ENCODE measurements at regions of chr1 and their contacts with region 1.

Region 1: DNA sequence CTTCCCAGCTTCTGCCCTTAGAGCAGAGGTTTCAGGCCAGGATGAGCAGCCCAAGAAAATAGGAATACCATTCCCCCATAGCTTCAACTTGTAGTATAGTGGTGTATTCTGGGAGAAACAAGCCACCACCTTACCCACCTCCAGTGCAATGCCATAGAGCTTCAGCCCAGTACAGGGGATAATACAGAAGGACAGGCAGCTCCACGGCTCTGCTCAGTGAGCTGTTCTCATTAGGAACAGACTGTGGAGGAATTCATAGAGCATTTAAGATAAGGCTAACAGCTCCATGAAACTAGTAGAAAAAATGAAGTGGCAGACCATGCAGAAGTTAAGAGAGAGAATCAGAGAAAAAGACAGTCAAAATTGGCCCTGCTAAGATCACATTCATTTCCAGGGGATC is 294.7 kb upstream of the POGK start:
- DNase-seq: no peak
- ATAC-seq: peak in 1 of 8 donors; percentile 62
- H3K4me3 ChIP-seq: no peak overlapping the region
- H3K27ac ChIP-seq: no peak overlapping the region
- H3K4me1 ChIP-seq: no peaks in the 10 kb centered on the region
- H3K27me3 ChIP-seq: no peaks in the 10 kb centered on the region
- CTCF ChIP-seq: no peak

Region 2: GRCh38 chr1:166527752-166528151 is 16.8 kb before region 1 on chr1:
- intact Hi-C with region 1: loop called in 1 of 10 experiments (anchors 2 kb)
- DNase-seq: no peak
- ATAC-seq: no peak
- H3K4me3 ChIP-seq: no peak overlapping the region
- H3K27ac ChIP-seq: no peak overlapping the region
- H3K4me1 ChIP-seq: no peaks in the 10 kb centered on the region
- H3K27me3 ChIP-seq: no peaks in the 10 kb centered on the region
- CTCF ChIP-seq: no peak

Region 3: GRCh38 chr1:166588741-166589140 is 44.2 kb after region 1 on chr1:
- intact Hi-C with region 1: no loop called
- DNase-seq: no peak
- ATAC-seq: no peak
- H3K4me3 ChIP-seq: no peak overlapping the region
- H3K27ac ChIP-seq: no peak overlapping the region
- H3K4me1 ChIP-seq: peaks cover 0 to 8% (median 0%) of the 10 kb centered on the region in 9 donors
- H3K27me3 ChIP-seq: no peaks in the 10 kb centered on the region
- CTCF ChIP-seq: no peak

Region 4: GRCh38 chr1:166603247-166603646 is 58.7 kb after region 1 on chr1:
- intact Hi-C with region 1: no loop called
- DNase-seq: no peak
- ATAC-seq: no peak
- H3K4me3 ChIP-seq: no peak overlapping the region
- H3K27ac ChIP-seq: no peak overlapping the region
- H3K4me1 ChIP-seq: peaks cover 0 to 10% (median 0%) of the 10 kb centered on the region in 9 donors
- H3K27me3 ChIP-seq: no peaks in the 10 kb centered on the region
- CTCF ChIP-seq: no peak

Measured in heart right ventricle (tissue), 16 donors.